Psoas muscle (tissue), 8 donors: ENCODE measurements at regions of chr6 and their contacts with region 1.

Region 1: GRCh38 chr6:71383901-71384489 is 95.4 kb downstream of the OGFRL1 start:
- DNase-seq: no peak
- ATAC-seq: peak in 1 of 4 donors; percentile 40
- H3K4me3 ChIP-seq: no peak overlapping the region
- H3K27ac ChIP-seq: no peak overlapping the region
- H3K4me1 ChIP-seq: peaks cover 32% of the 10 kb centered on the region
- H3K27me3 ChIP-seq: no peaks in the 10 kb centered on the region
- CTCF ChIP-seq: peak; percentile 80

Region 2: DNA sequence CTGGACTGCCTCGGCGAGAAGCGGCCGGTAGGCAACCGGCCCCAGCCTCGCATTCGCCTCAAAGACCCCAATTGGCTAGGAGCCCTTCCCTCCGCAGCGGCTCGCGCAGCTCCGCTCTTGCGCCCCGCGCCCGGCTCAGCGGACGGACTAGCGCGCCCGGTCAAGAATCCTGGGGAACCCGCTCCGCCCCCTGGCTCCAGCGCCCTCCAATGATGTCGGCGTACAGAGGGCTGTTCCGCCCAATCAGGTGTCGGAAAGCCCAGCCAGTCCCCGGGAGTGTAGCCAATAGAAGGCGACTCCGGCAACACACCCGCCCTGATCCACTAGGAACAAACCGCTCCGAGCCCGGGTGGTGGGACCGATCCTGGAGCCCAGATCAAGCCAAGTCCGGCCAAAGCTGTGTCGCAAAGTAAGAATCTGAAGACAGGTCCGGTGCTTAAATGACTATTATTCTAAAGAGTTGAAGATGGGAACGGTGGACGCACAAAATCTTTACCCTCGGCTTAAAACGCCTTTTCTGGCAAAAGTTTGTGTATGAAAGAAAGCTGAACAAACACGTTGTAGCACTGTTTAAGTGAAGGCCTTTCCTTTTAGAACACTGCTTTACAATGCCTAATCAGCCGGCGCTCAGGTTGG is 36.8 kb after region 1 on chr6:
- intact Hi-C with region 1: loop called (anchors 5 kb)
- DNase-seq: peak; percentile 95 to 97
- ATAC-seq: peak; percentile 96 to 99 (median 98)
- H3K4me3 ChIP-seq: peak overlapping the region; percentile 92
- H3K27ac ChIP-seq: peak overlapping the region; percentile 95
- H3K4me1 ChIP-seq: peaks cover 18% of the 10 kb centered on the region
- H3K27me3 ChIP-seq: no peaks in the 10 kb centered on the region
- CTCF ChIP-seq: no peak

Region 3: DNA sequence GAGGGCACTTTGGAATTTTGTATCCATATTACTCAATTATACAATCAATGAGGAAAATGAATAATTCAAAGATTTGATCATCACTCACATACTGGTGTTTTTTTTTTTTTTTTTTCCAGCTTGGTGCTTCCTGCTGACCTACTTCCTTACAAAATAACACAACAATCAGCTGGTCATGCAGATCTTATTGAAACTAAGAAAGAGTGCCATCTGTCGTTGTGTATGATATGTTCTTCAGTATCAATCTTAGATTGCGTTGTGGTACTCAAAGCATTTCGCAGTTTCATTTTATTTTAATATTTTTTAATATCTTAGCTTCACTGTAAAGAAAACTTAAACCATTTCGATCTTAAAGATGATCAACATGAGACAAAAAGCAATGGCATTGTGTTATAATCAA is 60.2 kb after region 1 on chr6:
- intact Hi-C with region 1: loop called (anchors 5 kb)
- DNase-seq: no peak
- ATAC-seq: peak in 3 of 4 donors; percentile 47 to 87 (median 73)
- H3K4me3 ChIP-seq: no peak overlapping the region
- H3K27ac ChIP-seq: no peak overlapping the region
- H3K4me1 ChIP-seq: no peaks in the 10 kb centered on the region
- H3K27me3 ChIP-seq: no peaks in the 10 kb centered on the region
- CTCF ChIP-seq: peak; percentile 37

Region 4: DNA sequence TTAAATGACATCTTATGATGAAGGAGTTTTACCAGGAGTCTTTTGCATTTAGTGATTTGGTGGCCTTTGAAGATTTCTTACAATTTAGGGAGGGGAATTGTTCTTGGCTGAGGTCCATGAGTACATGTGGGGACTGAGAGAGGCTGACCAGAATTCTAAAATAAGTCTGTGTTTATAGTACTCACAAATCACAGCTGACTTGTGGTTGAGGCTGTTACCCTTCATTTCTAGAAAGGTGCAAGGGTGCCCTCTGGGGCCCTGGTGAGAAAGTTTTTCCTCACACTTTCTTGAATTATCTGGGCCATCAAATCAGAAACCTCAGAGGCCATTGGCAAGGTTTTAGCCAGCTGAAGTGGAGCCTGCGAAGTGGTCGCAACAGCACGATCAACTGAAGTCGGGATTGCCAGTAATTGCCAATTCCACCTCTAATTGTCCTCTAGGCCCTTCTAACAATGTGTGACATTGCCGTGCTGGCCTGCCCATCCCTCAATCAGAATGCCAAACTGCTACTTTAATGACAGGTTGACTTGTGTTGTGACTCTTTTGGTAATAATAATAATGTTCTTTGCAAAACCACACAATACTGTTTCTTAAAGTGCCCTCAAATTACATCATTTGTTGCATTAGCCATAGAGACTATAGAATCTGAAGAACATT is 126.2 kb after region 1 on chr6:
- intact Hi-C with region 1: loop called (anchors 1 to 5 kb)
- DNase-seq: peak; percentile 31 to 49
- ATAC-seq: peak; percentile 67 to 85 (median 71)
- H3K4me3 ChIP-seq: no peak overlapping the region
- H3K27ac ChIP-seq: no peak overlapping the region
- H3K4me1 ChIP-seq: peaks cover 11% of the 10 kb centered on the region
- H3K27me3 ChIP-seq: no peaks in the 10 kb centered on the region
- CTCF ChIP-seq: peak; percentile 54